Right lobe of liver (tissue), 6 donors: ENCODE measurements at regions of chr1 and their contacts with region 1.

Region 1: DNA sequence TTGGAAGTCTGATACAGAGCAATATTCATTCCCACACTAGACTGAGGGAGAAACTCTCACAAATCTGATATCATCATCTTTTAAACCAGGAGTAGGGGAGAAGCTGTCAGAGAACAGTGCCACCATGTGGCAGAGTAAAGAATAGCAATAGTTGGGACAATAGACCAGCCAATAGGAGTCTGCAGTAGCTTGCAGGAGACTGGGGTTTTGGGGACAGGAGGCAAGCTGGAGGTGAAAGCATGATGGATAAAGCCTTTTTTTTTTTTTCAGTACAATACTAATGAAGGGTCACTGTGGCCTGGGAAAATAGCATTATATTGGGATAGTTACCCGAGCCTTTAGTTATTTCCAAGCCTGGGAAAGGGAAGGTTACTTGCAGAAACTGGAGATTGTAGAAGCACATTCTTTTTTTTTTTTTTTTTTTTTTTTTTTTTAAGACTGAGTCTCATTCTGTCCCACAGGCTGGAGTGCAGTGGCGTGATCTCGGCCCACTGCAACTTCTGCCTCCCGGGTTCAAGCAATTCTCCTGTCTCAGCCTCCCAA is 120.7 kb downstream of the S1PR1 start:
- DNase-seq: peak in 1 of 3 donors; percentile 63
- ATAC-seq: peak; percentile 99 to 100 (median 100)
- H3K4me3 ChIP-seq: no peak overlapping the region
- H3K27ac ChIP-seq: no peak overlapping the region
- H3K4me1 ChIP-seq: no peaks in the 10 kb centered on the region
- H3K27me3 ChIP-seq: no peaks in the 10 kb centered on the region
- CTCF ChIP-seq: peak; percentile 76 to 89 (median 84)
- POLR2A ChIP-seq: no peak

Region 2: GRCh38 chr1:101309334-101310311 is 47.9 kb before region 1 on chr1:
- intact Hi-C with region 1: loop called (anchors 5 kb)
- DNase-seq: peak; percentile 57 to 76 (median 59)
- ATAC-seq: peak; percentile 88 to 96 (median 91)
- H3K4me3 ChIP-seq: peak overlapping the region in 2 of 3 donors; percentile 9 to 41
- H3K27ac ChIP-seq: no peak overlapping the region
- H3K4me1 ChIP-seq: peaks cover 0 to 7% (median 3%) of the 10 kb centered on the region in 4 donors
- H3K27me3 ChIP-seq: no peaks in the 10 kb centered on the region
- CTCF ChIP-seq: peak; percentile 74 to 85 (median 82)
- POLR2A ChIP-seq: no peak

Region 3: DNA sequence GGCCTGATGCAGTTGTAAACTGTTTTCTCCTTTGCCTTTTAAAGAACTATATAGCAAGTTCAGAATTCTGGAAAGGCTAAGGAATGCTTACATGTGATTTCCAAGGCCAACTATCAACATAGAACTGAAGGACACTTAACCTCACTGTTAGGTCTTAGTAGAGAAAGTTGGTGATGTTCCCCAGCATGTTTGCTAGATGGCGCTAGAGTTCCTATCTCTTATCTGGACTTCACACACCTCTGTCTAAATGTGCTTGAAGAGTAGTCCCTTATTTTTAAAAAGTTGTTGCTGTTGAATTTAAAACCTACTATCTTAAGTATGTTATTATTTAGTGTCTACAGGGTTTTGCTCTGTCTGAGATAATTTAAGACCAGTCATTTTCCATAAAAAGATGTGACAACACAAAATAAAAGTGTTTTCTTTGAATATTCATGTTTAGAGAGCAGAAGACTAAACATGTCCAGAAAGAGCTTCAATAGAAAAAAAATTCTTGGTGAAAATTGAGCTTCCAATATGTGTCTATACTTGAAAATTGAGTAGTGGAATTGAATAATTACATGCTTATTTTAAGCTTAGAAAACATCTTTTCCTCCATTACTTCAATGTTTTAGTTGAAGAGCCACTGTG is 116.6 kb after region 1 on chr1:
- intact Hi-C with region 1: no loop called
- DNase-seq: no peak
- ATAC-seq: no peak
- H3K4me3 ChIP-seq: no peak overlapping the region
- H3K27ac ChIP-seq: no peak overlapping the region
- H3K4me1 ChIP-seq: no peaks in the 10 kb centered on the region
- H3K27me3 ChIP-seq: no peaks in the 10 kb centered on the region
- CTCF ChIP-seq: no peak
- POLR2A ChIP-seq: no peak

Region 4: GRCh38 chr1:101520302-101520701 is 162.8 kb after region 1 on chr1:
- intact Hi-C with region 1: no loop called
- DNase-seq: no peak
- ATAC-seq: peak; percentile 71 to 81 (median 78)
- H3K4me3 ChIP-seq: no peak overlapping the region
- H3K27ac ChIP-seq: no peak overlapping the region
- H3K4me1 ChIP-seq: no peaks in the 10 kb centered on the region
- H3K27me3 ChIP-seq: no peaks in the 10 kb centered on the region
- CTCF ChIP-seq: peak; percentile 63 to 77 (median 74)
- POLR2A ChIP-seq: no peak